Panc1 (cell line): ENCODE measurements at regions of chr16 and their contacts with region 1.

Region 1: GRCh38 chr16:14241631-14242030 is 170.5 kb downstream of the MRTFB start:
- DNase-seq: no peak
- ATAC-seq: no peak
- H3K4me3 ChIP-seq: no peak overlapping the region
- H3K27ac ChIP-seq: no peak overlapping the region
- H3K4me1 ChIP-seq: no peaks in the 10 kb centered on the region
- H3K27me3 ChIP-seq: no peaks in the 10 kb centered on the region
- CTCF ChIP-seq: no peak

Region 2: GRCh38 chr16:14151256-14152030 is 90.2 kb before region 1 on chr16:
- CTCF ChIA-PET with region 1: no interaction called
- POLR2A ChIA-PET with region 1: no interaction called
- in situ Hi-C with region 1: no loop called
- intact Hi-C with region 1: no loop called
- DNase-seq: no peak
- ATAC-seq: no peak
- H3K4me3 ChIP-seq: no peak overlapping the region
- H3K27ac ChIP-seq: no peak overlapping the region
- H3K4me1 ChIP-seq: peaks cover 16% of the 10 kb centered on the region
- H3K27me3 ChIP-seq: no peaks in the 10 kb centered on the region
- CTCF ChIP-seq: no peak

Region 3: GRCh38 chr16:14225457-14225856 is 16.2 kb before region 1 on chr16:
- CTCF ChIA-PET with region 1: no interaction called
- POLR2A ChIA-PET with region 1: no interaction called
- in situ Hi-C with region 1: no loop called
- intact Hi-C with region 1: no loop called
- DNase-seq: no peak
- ATAC-seq: no peak
- H3K4me3 ChIP-seq: no peak overlapping the region
- H3K27ac ChIP-seq: no peak overlapping the region
- H3K4me1 ChIP-seq: no peaks in the 10 kb centered on the region
- H3K27me3 ChIP-seq: no peaks in the 10 kb centered on the region
- CTCF ChIP-seq: no peak

Region 4: DNA sequence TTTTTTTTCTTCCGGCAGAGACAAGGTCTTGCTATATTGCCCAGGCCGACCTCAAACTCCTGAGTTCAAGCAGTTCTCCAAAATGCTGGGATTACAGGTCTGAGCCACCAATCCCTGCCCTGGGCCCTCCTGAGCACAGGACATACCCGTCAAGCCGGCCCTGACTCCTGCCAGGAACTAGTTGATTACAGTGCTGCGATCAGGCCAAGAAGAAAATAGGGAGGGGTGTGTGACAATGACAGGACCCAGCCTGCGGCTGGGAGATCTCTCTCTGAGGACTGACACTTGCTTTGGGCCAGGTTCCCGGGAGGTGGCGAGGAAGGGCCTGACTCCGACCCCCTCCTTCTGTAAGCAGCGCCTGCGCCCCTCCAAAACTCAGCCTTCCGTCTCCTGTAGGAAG is 106.1 kb after region 1 on chr16:
- CTCF ChIA-PET with region 1: no interaction called
- POLR2A ChIA-PET with region 1: no interaction called
- in situ Hi-C with region 1: no loop called
- intact Hi-C with region 1: no loop called
- DNase-seq: no peak
- ATAC-seq: no peak
- H3K4me3 ChIP-seq: no peak overlapping the region
- H3K27ac ChIP-seq: no peak overlapping the region
- H3K4me1 ChIP-seq: no peaks in the 10 kb centered on the region
- H3K27me3 ChIP-seq: no peaks in the 10 kb centered on the region
- CTCF ChIP-seq: no peak

Region 5: DNA sequence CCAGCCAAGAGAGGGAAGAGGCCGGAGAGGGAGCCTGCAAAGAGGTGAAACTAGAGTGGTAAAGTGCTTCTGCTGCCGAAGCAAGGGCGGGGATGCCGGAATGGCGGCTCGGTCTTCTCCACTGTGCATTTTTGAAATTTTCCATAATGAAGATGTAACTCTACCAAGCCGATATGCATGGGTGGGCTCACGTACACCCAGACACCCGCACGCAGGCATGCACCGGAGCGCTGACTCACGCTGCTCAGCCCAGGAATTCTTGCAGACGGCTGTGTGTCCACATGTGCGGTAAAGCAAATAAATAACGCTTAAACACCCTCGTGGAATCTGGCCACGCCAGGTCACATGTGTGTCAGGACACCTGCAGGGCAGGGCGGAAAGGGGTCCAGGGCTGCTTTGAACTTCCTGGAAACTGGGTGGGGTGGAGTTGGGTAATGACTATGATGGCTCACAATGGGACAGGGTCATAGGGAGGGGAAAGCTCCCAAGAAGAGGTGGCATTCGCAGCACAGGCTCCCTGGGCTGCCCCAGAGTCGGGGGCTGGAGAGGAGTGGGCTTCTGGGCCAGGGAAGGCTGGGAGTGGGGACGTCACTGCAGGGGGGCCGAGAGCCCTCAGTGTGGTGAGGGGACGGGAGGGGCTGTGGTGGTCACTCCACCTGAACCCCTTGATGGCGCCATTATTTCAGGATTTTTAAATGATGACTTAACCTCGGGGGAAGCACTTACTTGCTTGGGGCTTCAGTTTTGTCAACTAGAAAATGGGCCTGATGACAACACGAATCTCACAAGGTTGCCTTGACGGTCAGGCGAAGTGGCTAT is 123.0 kb after region 1 on chr16:
- CTCF ChIA-PET with region 1: no interaction called
- POLR2A ChIA-PET with region 1: no interaction called
- in situ Hi-C with region 1: no loop called
- intact Hi-C with region 1: no loop called
- DNase-seq: no peak
- ATAC-seq: peak; percentile 60
- H3K4me3 ChIP-seq: peak overlapping the region; percentile 11 to 51; a peak in 3 of 4 replicates
- H3K27ac ChIP-seq: peak overlapping the region; percentile 40
- H3K4me1 ChIP-seq: peaks cover 11% of the 10 kb centered on the region
- H3K27me3 ChIP-seq: no peaks in the 10 kb centered on the region
- CTCF ChIP-seq: no peak

Region 6: GRCh38 chr16:16148755-16149154 is 1907.1 kb after region 1 on chr16:
- CTCF ChIA-PET with region 1: no interaction called
- POLR2A ChIA-PET with region 1: interaction called, 14 read pairs
- in situ Hi-C with region 1: no loop called
- intact Hi-C with region 1: no loop called
- DNase-seq: no peak
- ATAC-seq: no peak
- H3K4me3 ChIP-seq: no peak overlapping the region
- H3K27ac ChIP-seq: no peak overlapping the region
- H3K4me1 ChIP-seq: peaks cover 39% of the 10 kb centered on the region
- H3K27me3 ChIP-seq: no peaks in the 10 kb centered on the region
- CTCF ChIP-seq: no peak